AG04450 (cell line): ENCODE measurements at regions of chr2 and their contacts with region 1.

Region 1: GRCh38 chr2:189798312-189799029 is 14.2 kb downstream of the PMS1 start:
- DNase-seq: no peak
- H3K4me3 ChIP-seq: no peak overlapping the region
- H3K27ac ChIP-seq: no peak overlapping the region
- H3K27me3 ChIP-seq: no peaks in the 10 kb centered on the region
- CTCF ChIP-seq: peak; percentile 63

Region 2: DNA sequence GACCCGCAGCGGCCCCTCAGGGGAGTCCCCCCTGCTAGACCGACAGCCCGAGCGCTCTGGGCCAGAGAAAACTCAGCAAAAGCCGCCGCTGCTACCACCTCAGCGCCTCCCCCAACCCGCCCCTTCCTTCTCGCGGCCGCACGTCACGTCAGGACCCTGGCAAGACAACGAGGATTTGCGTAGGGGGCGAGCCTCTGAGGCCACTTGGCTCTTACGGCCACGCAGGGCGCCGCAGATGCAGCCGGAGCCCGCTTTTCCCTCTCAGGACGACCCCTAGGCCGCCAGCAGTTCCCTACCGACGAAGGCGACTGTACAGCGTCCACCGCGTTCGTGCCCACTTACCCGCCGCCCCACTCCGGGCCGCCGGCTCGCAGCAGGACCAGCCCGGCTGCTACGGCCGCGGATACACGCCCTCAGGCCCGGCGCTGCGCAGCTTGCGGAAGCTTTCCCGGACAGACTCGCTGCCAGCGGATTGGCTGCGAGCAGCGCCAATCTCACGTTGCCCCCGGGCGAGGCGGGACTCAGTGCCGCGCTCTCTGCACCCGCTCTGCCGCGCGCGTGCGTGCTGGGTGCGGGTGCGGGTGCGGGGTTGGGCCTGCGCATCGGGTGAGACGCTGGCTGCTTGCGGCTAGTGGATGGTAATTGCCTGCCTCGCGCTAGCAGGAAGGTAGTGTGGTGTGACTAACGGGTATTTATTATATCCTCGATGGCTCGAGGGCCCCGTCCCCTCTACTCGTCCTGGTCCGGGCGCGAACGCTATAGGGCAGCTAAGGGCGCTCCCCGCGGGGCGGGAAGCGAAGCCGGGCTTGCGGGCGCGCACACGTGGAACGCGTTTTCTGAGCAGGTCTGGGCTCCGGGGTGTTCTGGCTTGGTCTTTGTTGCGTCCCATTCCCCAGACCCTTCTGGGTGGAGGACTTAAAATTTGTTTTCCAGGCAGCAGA is 14.3 kb before region 1 on chr2 and contains the starts of genes ORMDL1 and PMS1:
- CTCF ChIA-PET with region 1: interaction called, 19 read pairs
- POLR2A ChIA-PET with region 1: no interaction called
- DNase-seq: peak; percentile 89
- H3K4me3 ChIP-seq: peak within 1 kb of the TSS; percentile 65
- H3K27ac ChIP-seq: peak within 1 kb of the TSS; percentile 95
- H3K27me3 ChIP-seq: no peaks in the 10 kb centered on the region
- CTCF ChIP-seq: no peak
- polyA plus RNA-seq, gene ORMDL1: 73.0 and 92.8 TPM in 2 replicates
- polyA plus RNA-seq, gene PMS1: 11.0 and 16.3 TPM in 2 replicates

Region 3: DNA sequence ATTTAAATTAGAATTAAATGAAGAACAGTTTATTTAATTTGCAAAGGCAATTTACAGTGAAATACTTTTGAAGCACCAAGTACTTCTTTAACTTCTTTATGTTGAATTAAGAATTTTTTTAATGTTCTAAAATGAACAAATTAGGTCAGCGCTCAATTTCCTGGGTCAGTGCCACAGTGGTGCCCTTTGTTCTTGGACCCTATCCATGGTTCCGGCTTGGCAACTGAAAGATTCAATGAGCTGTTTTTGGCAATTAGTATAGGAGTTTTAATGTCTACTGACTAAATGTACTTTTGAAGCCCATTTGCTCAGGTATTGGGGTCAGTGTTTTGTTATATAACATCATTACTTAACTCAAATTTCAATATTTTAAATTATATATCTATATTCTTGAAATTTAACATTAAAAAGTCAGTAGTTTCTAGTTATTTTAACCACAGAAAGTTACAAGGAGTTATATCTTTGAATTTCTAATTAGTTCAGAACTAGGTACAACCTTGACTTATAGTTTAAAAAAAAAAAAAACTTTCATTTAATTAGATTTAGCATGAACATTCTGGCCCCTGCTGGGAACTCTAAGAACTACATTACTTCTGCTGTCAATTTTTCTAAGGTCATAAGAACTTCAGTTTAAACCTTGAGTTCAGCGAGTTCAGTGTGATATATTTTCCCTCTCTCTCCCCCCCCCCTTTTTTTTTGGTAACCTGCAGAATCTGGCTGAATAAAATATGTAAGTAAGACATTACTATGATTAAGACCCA is 271.6 kb after region 1 on chr2:
- CTCF ChIA-PET with region 1: interaction called, 82 read pairs
- POLR2A ChIA-PET with region 1: no interaction called
- DNase-seq: peak; percentile 43
- H3K4me3 ChIP-seq: no peak overlapping the region
- H3K27ac ChIP-seq: no peak overlapping the region
- H3K27me3 ChIP-seq: no peaks in the 10 kb centered on the region
- CTCF ChIP-seq: peak; percentile 74

Region 4: DNA sequence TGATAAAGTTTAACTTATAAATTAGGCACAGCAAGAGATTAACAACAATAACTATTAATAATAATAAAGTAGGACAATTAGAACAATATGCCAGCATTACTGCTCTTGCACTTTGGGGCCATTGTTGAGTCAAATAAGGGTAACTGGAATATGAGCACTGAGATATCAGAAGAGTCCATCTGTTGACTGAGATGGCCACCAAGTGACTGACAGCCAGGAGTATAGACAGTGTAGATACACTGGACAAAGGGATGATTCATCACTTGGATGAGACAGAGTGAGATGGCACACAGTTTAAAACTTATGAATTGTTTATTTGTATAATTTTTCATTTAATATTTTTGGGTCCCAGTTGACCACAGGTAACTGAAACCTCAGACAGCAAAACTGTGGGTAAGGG is 870.4 kb after region 1 on chr2:
- CTCF ChIA-PET with region 1: no interaction called
- POLR2A ChIA-PET with region 1: no interaction called
- DNase-seq: no peak
- H3K4me3 ChIP-seq: no peak overlapping the region
- H3K27ac ChIP-seq: no peak overlapping the region
- H3K27me3 ChIP-seq: no peaks in the 10 kb centered on the region
- CTCF ChIP-seq: no peak